ENCODE measurements at regions of chr10 and their contacts with region 1.

Region 1: DNA sequence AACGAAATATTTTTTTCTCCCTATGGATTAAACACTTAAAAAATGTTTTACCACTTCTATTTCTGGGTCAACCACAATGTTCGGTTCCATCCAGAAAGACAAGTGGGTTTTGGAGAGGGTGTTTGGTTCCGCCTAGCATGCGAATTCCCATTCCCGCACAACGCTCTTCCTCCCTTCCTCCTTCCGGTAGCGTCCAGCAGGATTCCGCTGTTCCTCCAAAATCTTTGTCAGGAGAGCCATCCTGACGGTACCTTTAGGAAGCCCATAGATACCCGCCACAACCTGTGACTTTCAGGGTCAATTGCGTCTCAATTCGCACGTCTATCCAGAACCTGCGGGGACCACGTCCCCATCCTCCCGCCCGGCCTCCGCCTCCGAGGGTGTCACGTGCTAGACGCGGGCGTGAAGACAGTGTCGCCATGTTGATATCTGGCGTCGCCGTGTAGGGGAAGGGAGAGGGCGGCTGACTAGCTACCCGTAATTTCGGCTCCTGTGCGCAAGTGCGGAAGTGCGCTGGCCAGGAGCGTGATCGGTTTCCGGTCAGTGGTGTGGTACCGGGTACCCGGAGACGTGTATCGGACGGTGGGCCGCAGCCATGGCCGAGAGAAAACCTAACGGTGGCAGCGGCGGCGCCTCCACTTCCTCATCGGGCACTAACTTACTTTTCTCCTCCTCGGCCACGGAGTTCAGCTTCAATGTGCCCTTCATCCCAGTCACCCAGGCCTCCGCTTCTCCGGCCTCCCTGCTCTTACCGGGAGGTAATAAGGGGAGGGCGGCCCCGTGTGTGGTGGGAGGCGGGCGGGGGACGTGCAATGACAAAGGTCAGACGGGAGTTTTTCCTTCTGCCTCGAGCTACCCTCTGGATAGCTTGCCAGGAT is at the start of gene SEC23IP:
- DNase-seq: peak; percentile 97
- ATAC-seq: peak; percentile 89
- H3K4me3 ChIP-seq: peak within 1 kb of the TSS; percentile 87
- H3K27ac ChIP-seq: peak within 1 kb of the TSS; percentile 93
- H3K4me1 ChIP-seq: peaks cover 10% of the 10 kb centered on the region
- H3K27me3 ChIP-seq: no peaks in the 10 kb centered on the region
- CTCF ChIP-seq: no peak
- POLR2A ChIP-seq: peak; percentile 93
- RAD21 ChIP-seq: no peak
- total RNA-seq, gene SEC23IP: 33.6 and 39.8 TPM in 2 replicates

Region 2: GRCh38 chr10:119872860-119873681 is 19.4 kb before region 1 on chr10:
- CTCF ChIA-PET with region 1: no interaction called
- POLR2A ChIA-PET with region 1: no interaction called
- dilution Hi-C with region 1: no loop called
- in situ Hi-C with region 1: no loop called
- intact Hi-C with region 1: loop called (anchors 1 kb)
- DNase-seq: peak; percentile 80
- ATAC-seq: peak; percentile 96
- H3K4me3 ChIP-seq: peak overlapping the region; percentile 55
- H3K27ac ChIP-seq: peak overlapping the region; percentile 66
- H3K4me1 ChIP-seq: no peaks in the 10 kb centered on the region; the same call in 1 of the 2 replicates
- H3K27me3 ChIP-seq: no peaks in the 10 kb centered on the region
- CTCF ChIP-seq: no peak
- POLR2A ChIP-seq: no peak
- RAD21 ChIP-seq: no peak

Measured in IMR-90 (cell line).